Heart left ventricle (tissue), 16 donors: ENCODE measurements at regions of chr6 and their contacts with region 1.

Region 1: GRCh38 chr6:167932468-167933276 is 64.8 kb upstream of the KIF25 start:
- DNase-seq: no peak
- ATAC-seq: no peak
- H3K4me3 ChIP-seq: no peak overlapping the region
- H3K27ac ChIP-seq: peak overlapping the region in 8 of 12 donors; percentile 61 to 82 (median 78)
- H3K4me1 ChIP-seq: peaks cover 0 to 27% (median 15%) of the 10 kb centered on the region in 12 donors
- H3K27me3 ChIP-seq: no peaks in the 10 kb centered on the region
- CTCF ChIP-seq: no peak
- POLR2A ChIP-seq: no peak

Region 2: DNA sequence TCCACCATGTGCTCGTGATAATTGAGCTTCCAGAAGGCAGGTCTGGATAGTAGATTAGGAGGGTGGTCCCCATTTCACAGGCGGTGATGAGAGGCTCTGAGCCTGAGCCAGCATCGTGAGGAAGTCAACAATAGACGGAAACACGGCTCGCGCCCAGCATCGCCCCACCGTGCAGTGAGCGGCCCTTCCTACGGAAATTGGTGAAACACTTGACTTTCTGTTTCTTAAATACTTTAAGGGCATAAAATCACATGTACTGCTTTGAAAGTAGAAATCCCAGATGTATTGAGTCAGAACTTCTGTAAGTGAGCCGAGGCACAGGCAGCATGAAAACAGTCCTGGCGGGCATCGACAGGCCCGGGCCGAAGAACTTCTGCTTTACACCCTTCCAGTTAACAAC is 60.5 kb after region 1 on chr6:
- intact Hi-C with region 1: loop called in 1 of 10 experiments (anchors 2 kb)
- DNase-seq: peak; percentile 75 to 80 (median 79)
- ATAC-seq: peak; percentile 75 to 97 (median 84)
- H3K4me3 ChIP-seq: no peak overlapping the region
- H3K27ac ChIP-seq: peak overlapping the region in 10 of 12 donors; percentile 46 to 86 (median 72)
- H3K4me1 ChIP-seq: peaks cover 0 to 23% (median 5%) of the 10 kb centered on the region in 12 donors
- H3K27me3 ChIP-seq: peaks cover 0 to 6% (median 0%) of the 10 kb centered on the region in 9 donors
- CTCF ChIP-seq: no peak
- POLR2A ChIP-seq: no peak

Region 3: DNA sequence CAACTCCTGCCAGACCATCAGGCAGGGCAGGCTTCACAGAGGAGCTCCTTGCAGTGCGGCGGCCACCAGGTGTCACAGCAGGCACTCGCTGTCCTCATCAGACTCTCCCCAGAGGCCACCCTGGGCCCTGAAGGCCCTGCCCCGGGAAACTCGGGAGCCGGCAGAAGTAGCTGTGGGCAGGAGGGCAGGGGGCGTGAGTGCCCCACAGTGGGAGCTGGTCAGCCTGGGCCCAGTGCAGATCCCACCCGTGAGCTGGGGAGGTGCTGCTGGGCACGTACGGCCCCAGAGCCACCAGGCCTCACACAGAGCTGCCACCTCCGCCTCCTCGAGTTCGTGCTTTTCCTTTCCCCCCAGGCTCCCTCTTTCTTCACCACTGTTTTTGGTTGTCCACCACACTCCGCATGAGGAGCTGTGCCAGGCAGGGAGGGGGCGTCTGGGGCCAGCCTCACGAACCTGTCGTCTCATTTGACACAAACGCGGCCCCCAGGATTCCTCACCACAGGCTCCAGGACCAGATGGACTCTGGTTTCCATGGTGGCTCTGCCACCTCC is 112.5 kb after region 1 on chr6:
- intact Hi-C with region 1: loop called in 2 of 10 experiments (anchors 5 to 10 kb)
- DNase-seq: no peak
- ATAC-seq: peak in 3 of 4 donors; percentile 25 to 53 (median 41)
- H3K4me3 ChIP-seq: no peak overlapping the region
- H3K27ac ChIP-seq: peak overlapping the region in 10 of 12 donors; percentile 34 to 78 (median 68)
- H3K4me1 ChIP-seq: peaks cover 6 to 20% (median 13%) of the 10 kb centered on the region in 12 donors
- H3K27me3 ChIP-seq: no peaks in the 10 kb centered on the region
- CTCF ChIP-seq: peak in 8 of 12 donors; percentile 7 to 28 (median 18)
- POLR2A ChIP-seq: no peak